ENCODE measurements at regions of chr1 and their contacts with region 1.

Region 1: GRCh38 chr1:240888039-240888786 is 276.3 kb upstream of the GREM2 start:
- DNase-seq: peak; percentile 88
- H3K4me3 Mint-ChIP-seq: no peak overlapping the region
- H3K27ac Mint-ChIP-seq: no peak overlapping the region
- H3K4me1 Mint-ChIP-seq: peaks cover 5% of the 10 kb centered on the region
- H3K27me3 Mint-ChIP-seq: no peaks in the 10 kb centered on the region
- CTCF ChIP-seq: peak; percentile 100

Region 2: DNA sequence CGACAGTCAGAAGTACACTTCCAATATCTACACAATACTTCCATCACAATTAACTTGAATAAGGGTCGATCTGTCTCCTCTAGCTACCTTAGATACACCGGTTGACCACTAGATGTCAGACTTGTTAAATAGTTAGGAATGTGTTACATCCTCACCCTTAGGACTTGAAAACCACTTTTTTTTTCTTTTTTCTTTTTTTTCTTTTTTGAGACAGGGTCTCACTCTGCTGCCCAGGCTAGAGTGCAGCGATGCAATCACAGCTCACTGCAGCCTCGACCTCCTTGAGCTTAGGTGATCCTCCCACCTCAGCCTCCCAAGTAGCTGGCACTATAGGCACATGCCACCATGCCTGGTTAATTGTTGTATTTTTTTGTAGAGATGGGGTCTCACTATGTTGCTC is 155.8 kb before region 1 on chr1:
- CTCF ChIA-PET with region 1: interaction called, 23 read pairs
- POLR2A ChIA-PET with region 1: no interaction called
- intact Hi-C with region 1: loop called (anchors 1 kb)
- DNase-seq: peak; percentile 86
- H3K4me3 Mint-ChIP-seq: no peak overlapping the region
- H3K27ac Mint-ChIP-seq: no peak overlapping the region
- H3K4me1 Mint-ChIP-seq: peaks cover 6% of the 10 kb centered on the region
- H3K27me3 Mint-ChIP-seq: no peaks in the 10 kb centered on the region
- CTCF ChIP-seq: peak; percentile 92

Region 3: GRCh38 chr1:240906477-240906876 is 18.3 kb after region 1 on chr1:
- CTCF ChIA-PET with region 1: interaction called, 17 read pairs
- POLR2A ChIA-PET with region 1: interaction called, 3 read pairs
- intact Hi-C with region 1: no loop called
- DNase-seq: peak; percentile 66
- H3K4me3 Mint-ChIP-seq: no peak overlapping the region
- H3K27ac Mint-ChIP-seq: no peak overlapping the region
- H3K4me1 Mint-ChIP-seq: no peaks in the 10 kb centered on the region
- H3K27me3 Mint-ChIP-seq: no peaks in the 10 kb centered on the region
- CTCF ChIP-seq: no peak

Region 4: GRCh38 chr1:240962086-240962485 is 73.9 kb after region 1 on chr1:
- CTCF ChIA-PET with region 1: interaction called, 20 read pairs
- POLR2A ChIA-PET with region 1: no interaction called
- intact Hi-C with region 1: loop called (anchors 5 kb)
- DNase-seq: no peak
- H3K4me3 Mint-ChIP-seq: no peak overlapping the region
- H3K27ac Mint-ChIP-seq: no peak overlapping the region
- H3K4me1 Mint-ChIP-seq: no peaks in the 10 kb centered on the region
- H3K27me3 Mint-ChIP-seq: no peaks in the 10 kb centered on the region
- CTCF ChIP-seq: no peak

Region 5: DNA sequence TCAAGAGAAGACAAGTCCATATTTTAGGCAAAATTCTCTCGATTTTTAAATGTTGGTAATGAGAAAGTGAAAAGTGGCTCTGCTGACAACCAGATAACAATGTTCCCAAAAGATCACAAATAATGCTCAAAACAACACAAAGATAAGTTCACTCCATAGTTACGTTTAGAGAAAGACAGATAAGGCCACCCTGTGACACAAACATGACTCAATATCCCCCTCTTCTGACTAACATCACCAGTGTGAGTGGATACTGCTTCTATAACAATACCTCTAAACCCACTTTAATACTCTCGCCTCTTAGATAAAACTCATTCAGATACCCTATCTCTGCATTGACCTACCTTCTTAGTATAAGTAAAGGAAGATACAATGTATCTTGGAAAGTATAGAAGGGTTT is 520.0 kb after region 1 on chr1:
- CTCF ChIA-PET with region 1: interaction called, 7 read pairs
- POLR2A ChIA-PET with region 1: no interaction called
- intact Hi-C with region 1: loop called (anchors 2 kb)
- DNase-seq: peak; percentile 51
- H3K4me3 Mint-ChIP-seq: no peak overlapping the region
- H3K27ac Mint-ChIP-seq: no peak overlapping the region
- H3K4me1 Mint-ChIP-seq: peaks cover 8% of the 10 kb centered on the region
- H3K27me3 Mint-ChIP-seq: peaks cover 13% of the 10 kb centered on the region
- CTCF ChIP-seq: peak; percentile 17

Region 6: DNA sequence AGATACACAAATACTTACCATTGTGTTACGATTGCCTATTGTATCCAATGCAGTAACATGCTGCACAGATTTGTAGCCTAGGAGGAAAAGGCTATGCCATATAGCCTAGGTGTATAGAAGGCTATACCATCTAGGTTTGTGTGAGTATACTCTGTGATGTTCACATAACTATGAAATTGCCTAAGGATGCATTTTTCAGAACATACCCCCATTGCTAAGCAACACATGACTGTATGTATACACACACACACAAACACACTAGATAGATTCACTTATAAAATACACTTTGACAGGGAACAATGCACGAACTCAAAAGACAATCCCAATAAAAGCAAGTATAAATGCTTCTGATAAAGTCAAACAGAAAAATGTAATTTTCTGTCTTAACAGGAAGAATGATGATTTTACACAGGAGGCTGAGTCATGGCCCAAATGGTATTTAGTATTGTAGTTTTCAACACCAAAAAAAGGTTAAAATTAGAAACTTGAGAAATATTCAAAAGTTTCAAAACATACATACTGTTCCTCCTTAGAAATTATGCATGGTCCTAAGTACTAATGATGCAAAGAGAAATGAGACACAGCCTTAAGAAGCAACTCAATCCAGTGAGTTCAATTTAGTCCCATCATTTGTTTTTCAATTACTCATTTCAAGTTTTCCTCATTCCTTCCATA is 619.1 kb after region 1 on chr1:
- CTCF ChIA-PET with region 1: interaction called, 20 read pairs
- POLR2A ChIA-PET with region 1: interaction called, 3 read pairs
- intact Hi-C with region 1: no loop called
- DNase-seq: no peak
- H3K4me3 Mint-ChIP-seq: no peak overlapping the region
- H3K27ac Mint-ChIP-seq: peak overlapping the region; percentile 53
- H3K4me1 Mint-ChIP-seq: peaks cover 5% of the 10 kb centered on the region
- H3K27me3 Mint-ChIP-seq: no peaks in the 10 kb centered on the region
- CTCF ChIP-seq: no peak

Region 7: DNA sequence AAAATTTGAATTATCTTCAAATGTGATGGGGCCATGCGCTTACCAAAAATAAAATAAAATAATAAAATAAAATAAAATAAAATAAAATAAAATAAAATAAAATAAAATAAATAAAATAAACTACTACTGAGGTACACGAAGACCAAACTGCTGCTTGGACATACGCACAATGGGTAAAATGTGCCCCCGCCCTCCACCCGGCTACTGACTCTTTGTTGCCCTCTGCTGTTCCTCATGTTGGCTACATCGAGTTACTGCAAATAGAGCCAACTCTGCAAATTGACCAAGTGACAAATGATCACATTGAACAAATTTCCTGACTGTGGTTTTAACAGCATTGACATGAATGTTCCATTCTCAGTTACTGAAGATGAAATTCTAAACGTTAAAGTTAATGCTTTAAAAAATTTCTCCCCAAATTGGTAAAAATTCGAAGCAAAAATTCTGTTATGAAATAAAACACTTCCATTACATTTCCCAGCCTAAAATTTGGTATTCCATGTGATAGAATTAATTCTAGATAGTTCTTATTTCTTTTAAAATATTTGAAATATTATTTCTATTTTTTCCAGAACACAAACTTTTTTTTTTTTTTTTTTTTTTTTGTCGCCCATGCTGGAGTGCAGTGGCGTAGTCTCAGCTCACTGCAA is 1129.5 kb after region 1 on chr1:
- CTCF ChIA-PET with region 1: no interaction called
- POLR2A ChIA-PET with region 1: no interaction called
- intact Hi-C with region 1: loop called (anchors 1 kb)
- DNase-seq: peak; percentile 86
- H3K4me3 Mint-ChIP-seq: no peak overlapping the region
- H3K27ac Mint-ChIP-seq: no peak overlapping the region
- H3K4me1 Mint-ChIP-seq: peaks cover 7% of the 10 kb centered on the region
- H3K27me3 Mint-ChIP-seq: no peaks in the 10 kb centered on the region
- CTCF ChIP-seq: peak; percentile 88

Measured in MCF 10A (cell line).